CD8-positive, alpha-beta T cell (primary cell): ENCODE measurements at regions of chr10 and their contacts with region 1.

Region 1: DNA sequence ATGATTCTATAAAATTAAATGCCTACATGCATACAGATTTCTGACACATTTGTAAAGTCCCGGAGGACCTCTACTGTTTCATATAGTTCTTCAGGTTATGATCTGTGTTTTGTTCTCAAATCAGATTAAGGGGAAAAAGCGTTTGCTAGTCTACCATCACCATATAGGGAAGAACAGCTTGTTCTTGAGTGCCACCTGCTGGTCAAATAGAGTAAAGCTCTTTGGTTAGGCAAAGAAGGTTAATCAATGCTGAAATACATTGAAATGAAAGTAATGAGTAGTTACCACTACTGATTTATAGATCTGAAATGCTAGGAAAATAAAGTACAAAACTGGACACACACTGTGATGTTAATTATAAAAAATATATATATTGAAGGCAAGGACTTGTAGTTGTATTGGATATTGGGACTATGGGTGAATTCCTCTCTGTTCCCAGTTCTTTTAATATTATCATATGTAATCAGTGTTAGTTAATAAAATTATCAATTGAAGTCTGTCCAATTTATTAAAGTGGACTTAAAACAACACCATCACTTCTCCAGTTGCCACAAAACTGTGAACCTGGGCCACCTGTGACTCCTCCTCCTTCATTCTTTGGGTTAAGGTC is 72.6 kb upstream of the PDLIM1 start:
- DNase-seq: peak in 7 of 9 experiments; percentile 6 to 75 (median 35)
- ATAC-seq: peak; percentile 46
- H3K4me3 ChIP-seq: no peak overlapping the region
- H3K4me3 Mint-ChIP-seq: no peak overlapping the region
- H3K27ac ChIP-seq: no peak overlapping the region
- H3K27ac Mint-ChIP-seq: no peak overlapping the region
- H3K4me1 ChIP-seq: no peaks in the 10 kb centered on the region
- H3K4me1 Mint-ChIP-seq: no peaks in the 10 kb centered on the region
- H3K27me3 ChIP-seq: no peaks in the 10 kb centered on the region
- H3K27me3 Mint-ChIP-seq: peaks cover 11% of the 10 kb centered on the region
- CTCF ChIP-seq: peak; percentile 99

Region 2: GRCh38 chr10:94630017-94630688 is 733.3 kb before region 1 on chr10:
- CTCF ChIA-PET with region 1: interaction called, 3 read pairs
- POLR2A ChIA-PET with region 1: no interaction called
- intact Hi-C with region 1: loop called in 1 of 2 experiments (anchors 1 kb)
- DNase-seq: peak in 2 of 9 experiments; percentile 3 to 13
- ATAC-seq: no peak
- H3K4me3 ChIP-seq: no peak overlapping the region
- H3K4me3 Mint-ChIP-seq: no peak overlapping the region
- H3K27ac ChIP-seq: no peak overlapping the region
- H3K27ac Mint-ChIP-seq: no peak overlapping the region
- H3K4me1 ChIP-seq: no peaks in the 10 kb centered on the region
- H3K4me1 Mint-ChIP-seq: no peaks in the 10 kb centered on the region
- H3K27me3 ChIP-seq: no peaks in the 10 kb centered on the region
- H3K27me3 Mint-ChIP-seq: no peaks in the 10 kb centered on the region
- CTCF ChIP-seq: peak; percentile 60

Region 3: GRCh38 chr10:95133016-95133752 is 230.2 kb before region 1 on chr10:
- CTCF ChIA-PET with region 1: interaction called, 6 read pairs
- POLR2A ChIA-PET with region 1: no interaction called
- intact Hi-C with region 1: loop called in 1 of 2 experiments (anchors 1 kb)
- DNase-seq: peak; percentile 21 to 75 (median 59)
- ATAC-seq: no peak
- H3K4me3 ChIP-seq: no peak overlapping the region
- H3K4me3 Mint-ChIP-seq: no peak overlapping the region
- H3K27ac ChIP-seq: no peak overlapping the region
- H3K27ac Mint-ChIP-seq: no peak overlapping the region
- H3K4me1 ChIP-seq: no peaks in the 10 kb centered on the region
- H3K4me1 Mint-ChIP-seq: no peaks in the 10 kb centered on the region
- H3K27me3 ChIP-seq: no peaks in the 10 kb centered on the region
- H3K27me3 Mint-ChIP-seq: no peaks in the 10 kb centered on the region
- CTCF ChIP-seq: peak; percentile 29

Region 4: DNA sequence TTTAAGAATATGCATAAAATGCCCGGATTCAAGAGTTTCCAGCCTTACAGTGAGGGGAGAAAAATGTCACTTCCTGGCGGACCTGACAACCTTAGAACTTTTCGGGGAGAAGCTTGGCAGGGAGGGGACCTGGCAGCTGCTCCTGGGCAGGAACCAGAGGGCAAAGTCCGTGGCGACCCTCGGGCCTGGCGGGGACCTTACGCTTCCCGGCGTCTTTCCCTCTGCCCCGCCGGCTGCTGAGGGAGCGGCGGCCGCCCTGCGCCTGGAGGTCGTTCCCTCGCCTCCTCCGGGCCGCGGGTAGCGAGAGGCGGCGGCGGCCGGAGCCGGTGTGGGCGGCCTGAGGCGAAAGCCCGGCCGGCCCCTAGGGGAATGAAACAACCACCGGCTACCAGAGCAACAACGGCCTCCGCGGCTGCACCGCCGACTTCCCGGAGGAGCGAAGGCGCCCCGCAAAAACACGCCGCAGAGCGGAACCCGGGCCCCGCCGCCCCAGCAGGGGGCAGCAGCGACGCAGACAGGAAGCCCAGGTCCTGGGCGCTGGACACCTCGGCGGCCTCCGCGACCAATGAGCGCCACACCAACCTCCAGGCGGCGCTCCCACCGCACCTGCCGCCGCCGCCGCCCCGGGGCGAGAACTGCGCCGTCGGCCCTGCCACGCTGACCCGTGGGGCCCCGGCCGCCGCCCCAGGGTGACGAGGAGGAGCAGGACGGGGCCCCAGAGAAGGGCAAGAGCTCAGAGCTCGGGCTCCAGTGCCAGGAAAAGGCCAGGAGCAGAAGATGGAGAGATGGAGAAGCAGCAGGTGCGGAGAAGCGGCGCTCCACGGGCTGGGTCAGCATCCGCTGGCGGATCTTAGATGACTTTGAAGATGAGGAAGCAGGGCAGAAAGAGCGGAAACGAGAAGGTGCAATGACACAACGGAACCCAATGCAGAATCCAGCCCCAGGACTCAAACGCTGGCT is 179.9 kb before region 1 on chr10:
- CTCF ChIA-PET with region 1: no interaction called
- POLR2A ChIA-PET with region 1: no interaction called
- intact Hi-C with region 1: loop called in 1 of 2 experiments (anchors 2 kb)
- DNase-seq: peak; percentile 22 to 84 (median 63)
- ATAC-seq: peak; percentile 82
- H3K4me3 ChIP-seq: peak overlapping the region; percentile 56 to 63
- H3K4me3 Mint-ChIP-seq: peak overlapping the region; percentile 78
- H3K27ac ChIP-seq: no peak overlapping the region
- H3K27ac Mint-ChIP-seq: no peak overlapping the region
- H3K4me1 ChIP-seq: no peaks in the 10 kb centered on the region
- H3K4me1 Mint-ChIP-seq: peaks cover 7% of the 10 kb centered on the region
- H3K27me3 ChIP-seq: peaks cover 0 to 3% of the 10 kb centered on the region in 2 experiments
- H3K27me3 Mint-ChIP-seq: peaks cover 22% of the 10 kb centered on the region
- CTCF ChIP-seq: peak; percentile 56

Region 5: GRCh38 chr10:95374597-95375209 is 11.3 kb after region 1 on chr10:
- CTCF ChIA-PET with region 1: interaction called, 56 read pairs
- POLR2A ChIA-PET with region 1: no interaction called
- intact Hi-C with region 1: no loop called
- DNase-seq: peak in 6 of 9 experiments; percentile 3 to 61 (median 32)
- ATAC-seq: no peak
- H3K4me3 ChIP-seq: no peak overlapping the region
- H3K4me3 Mint-ChIP-seq: no peak overlapping the region
- H3K27ac ChIP-seq: no peak overlapping the region
- H3K27ac Mint-ChIP-seq: no peak overlapping the region
- H3K4me1 ChIP-seq: no peaks in the 10 kb centered on the region
- H3K4me1 Mint-ChIP-seq: peaks cover 3% of the 10 kb centered on the region
- H3K27me3 ChIP-seq: no peaks in the 10 kb centered on the region
- H3K27me3 Mint-ChIP-seq: peaks cover 18% of the 10 kb centered on the region
- CTCF ChIP-seq: peak; percentile 49